Activated T-helper 2 cell treated with anti-CD3 and anti-CD28 coated beads, Interferon-gamma antibody, Interleukin-2, Interleukin-4, amounts not matched to agents 10 μg/mL and 5 μg/mL and 100 μg/mL, durations not matched to agents 14 hours and 24 hours and 36 hours (primary cell): ENCODE measurements at regions of chr6 and their contacts with region 1.

Region 1: GRCh38 chr6:111837641-111838500 is 35.4 kb downstream of the FYN start:
- DNase-seq: peak; percentile 59
- H3K4me3 Mint-ChIP-seq: peak overlapping the region; percentile 77
- H3K27ac Mint-ChIP-seq: peak overlapping the region; percentile 97
- H3K4me1 Mint-ChIP-seq: peaks cover 67% of the 10 kb centered on the region
- H3K27me3 Mint-ChIP-seq: no peaks in the 10 kb centered on the region

Region 2: GRCh38 chr6:111812060-111813038 is 25.5 kb before region 1 on chr6:
- intact Hi-C with region 1: loop called (anchors 1 kb)
- DNase-seq: no peak
- H3K4me3 Mint-ChIP-seq: peak overlapping the region; percentile 13
- H3K27ac Mint-ChIP-seq: peak overlapping the region; percentile 88
- H3K4me1 Mint-ChIP-seq: peaks cover 71% of the 10 kb centered on the region
- H3K27me3 Mint-ChIP-seq: no peaks in the 10 kb centered on the region

Region 3: GRCh38 chr6:111823831-111824607 is 13.9 kb before region 1 on chr6:
- intact Hi-C with region 1: loop called (anchors 1 kb)
- DNase-seq: no peak
- H3K4me3 Mint-ChIP-seq: peak overlapping the region; percentile 66
- H3K27ac Mint-ChIP-seq: peak overlapping the region; percentile 89
- H3K4me1 Mint-ChIP-seq: peaks cover 68% of the 10 kb centered on the region
- H3K27me3 Mint-ChIP-seq: no peaks in the 10 kb centered on the region

Region 4: GRCh38 chr6:111864138-111865048 is 26.5 kb after region 1 on chr6:
- intact Hi-C with region 1: loop called (anchors 1 kb)
- DNase-seq: no peak
- H3K4me3 Mint-ChIP-seq: peak overlapping the region; percentile 69
- H3K27ac Mint-ChIP-seq: peak overlapping the region; percentile 95
- H3K4me1 Mint-ChIP-seq: peaks cover 86% of the 10 kb centered on the region
- H3K27me3 Mint-ChIP-seq: no peaks in the 10 kb centered on the region

Region 5: DNA sequence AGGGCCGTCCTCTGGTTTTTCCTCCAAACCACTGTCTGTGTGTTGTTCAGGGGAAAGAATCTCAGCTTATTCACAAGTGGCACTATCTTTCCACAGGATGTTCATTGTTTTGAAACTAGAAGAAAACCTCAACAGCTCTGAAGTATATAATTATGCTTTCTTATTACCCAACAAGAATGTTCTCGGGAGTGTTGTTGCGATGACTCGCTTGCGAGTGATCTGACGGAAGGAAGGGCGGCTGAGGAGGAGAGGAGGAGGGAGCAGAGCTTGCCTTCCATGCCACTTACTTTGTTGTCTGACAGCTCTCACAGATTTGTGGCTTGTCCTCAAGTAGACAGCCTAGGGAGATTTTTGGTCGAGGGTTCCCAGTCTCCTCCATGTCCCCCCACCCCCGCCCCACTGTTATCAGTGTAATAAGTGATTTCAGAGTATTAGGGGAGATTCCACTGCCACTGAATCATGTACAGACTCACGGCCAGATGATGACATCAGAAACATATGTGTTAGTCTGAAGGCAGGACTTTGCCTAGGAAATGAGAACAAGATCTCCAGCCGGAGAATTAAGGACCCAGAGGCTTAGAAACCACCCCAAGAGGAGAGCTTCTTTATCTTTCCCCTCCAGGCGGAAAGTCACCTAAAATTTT is 135.4 kb after region 1 on chr6:
- intact Hi-C with region 1: loop called (anchors 1 kb)
- DNase-seq: peak; percentile 24
- H3K4me3 Mint-ChIP-seq: peak overlapping the region; percentile 24
- H3K27ac Mint-ChIP-seq: peak overlapping the region; percentile 70
- H3K4me1 Mint-ChIP-seq: peaks cover 53% of the 10 kb centered on the region
- H3K27me3 Mint-ChIP-seq: peaks cover 13% of the 10 kb centered on the region

Region 6: DNA sequence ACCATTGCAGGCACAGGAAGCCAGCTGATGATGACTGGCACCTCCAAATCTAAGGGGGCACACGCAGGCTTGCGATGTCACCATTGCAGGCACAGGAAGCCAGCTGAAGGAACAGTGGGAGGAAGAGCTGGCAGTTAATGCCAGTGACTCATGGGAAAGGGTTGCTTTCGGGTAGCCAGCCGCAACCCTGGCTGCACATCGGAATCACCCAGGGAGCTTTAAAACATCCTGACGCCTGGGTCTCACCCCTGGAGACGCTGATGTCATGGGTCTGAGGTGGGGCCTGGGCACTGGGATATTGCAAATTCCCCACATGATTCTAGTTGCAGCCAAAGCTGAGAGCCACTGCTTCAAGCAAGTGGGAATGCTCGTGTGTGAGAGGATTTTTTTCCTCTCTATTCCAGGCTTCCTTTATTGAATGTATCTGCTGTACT is 199.9 kb after region 1 on chr6:
- intact Hi-C with region 1: loop called (anchors 1 kb)
- DNase-seq: no peak
- H3K4me3 Mint-ChIP-seq: no peak overlapping the region
- H3K27ac Mint-ChIP-seq: peak overlapping the region; percentile 29
- H3K4me1 Mint-ChIP-seq: peaks cover 67% of the 10 kb centered on the region
- H3K27me3 Mint-ChIP-seq: no peaks in the 10 kb centered on the region